Activated CD8-positive, alpha-beta T cell treated with anti-CD3 and anti-CD28 coated beads, Interleukin-2, amount 10 ng/mL, durations not matched to agents 7 days and 5 days (primary cell): ENCODE measurements at regions of chr12 and their contacts with region 1.

Region 1: DNA sequence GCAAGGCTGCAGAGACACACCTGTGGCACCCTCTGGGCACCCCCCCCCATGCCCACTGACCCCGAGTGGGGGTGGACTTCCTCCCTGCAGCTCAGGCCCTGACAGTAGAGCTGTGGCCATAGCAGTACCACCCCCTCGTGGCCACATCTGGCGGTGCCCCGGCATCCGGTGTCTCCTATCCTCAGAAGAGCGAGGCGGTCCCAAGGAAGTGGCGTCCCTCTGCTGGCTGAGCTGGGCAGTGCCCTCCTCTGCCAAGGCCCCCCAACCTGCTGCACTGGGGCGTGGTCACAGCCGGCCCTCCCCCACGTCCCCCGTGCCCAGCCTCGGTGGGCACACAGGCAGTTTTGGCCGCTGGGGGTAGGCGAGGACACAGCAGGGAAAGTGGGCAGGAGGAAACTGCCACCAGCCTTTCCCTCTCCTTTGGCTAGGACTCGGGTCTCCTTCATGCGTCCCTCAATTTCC is 6.0 kb upstream of the SLC6A12 start:
- DNase-seq: peak; percentile 89
- ATAC-seq: peak; percentile 96
- H3K4me3 Mint-ChIP-seq: no peak overlapping the region
- H3K27ac Mint-ChIP-seq: no peak overlapping the region
- H3K4me1 Mint-ChIP-seq: peaks cover 5% of the 10 kb centered on the region
- H3K27me3 Mint-ChIP-seq: peaks cover 3% of the 10 kb centered on the region

Region 2: DNA sequence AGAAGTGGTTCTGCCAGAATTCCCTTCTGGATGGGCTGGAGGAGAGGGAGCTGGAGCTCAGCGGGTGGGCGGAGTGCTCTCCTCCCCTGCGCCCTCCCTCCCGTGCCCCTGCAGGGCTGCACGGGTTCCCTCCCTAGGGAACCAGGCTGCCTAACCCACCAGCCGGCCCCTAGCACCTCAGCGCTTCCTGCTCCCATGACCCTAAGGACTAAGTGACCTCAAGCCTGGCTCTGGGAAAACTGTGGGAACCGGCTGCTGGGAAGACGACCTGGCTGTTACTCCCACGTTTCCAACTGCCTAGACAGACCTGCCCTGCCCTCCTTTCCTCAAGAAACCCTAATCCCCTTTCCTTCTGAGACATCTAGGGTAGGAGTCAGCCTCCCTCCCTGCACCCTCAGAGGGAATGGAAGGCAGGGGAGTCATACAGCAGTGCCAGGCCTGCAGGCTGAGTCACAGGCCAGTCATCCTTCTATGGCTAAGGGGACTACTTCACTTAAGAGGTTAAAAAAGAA is 37.5 kb before region 1 on chr12:
- CTCF ChIA-PET with region 1: no interaction called
- POLR2A ChIA-PET with region 1: no interaction called
- DNase-seq: no peak
- ATAC-seq: no peak
- H3K4me3 Mint-ChIP-seq: no peak overlapping the region
- H3K27ac Mint-ChIP-seq: no peak overlapping the region
- H3K4me1 Mint-ChIP-seq: peaks cover 13% of the 10 kb centered on the region
- H3K27me3 Mint-ChIP-seq: peaks cover 10% of the 10 kb centered on the region

Region 3: GRCh38 chr12:201361-201760 is 18.6 kb before region 1 on chr12:
- CTCF ChIA-PET with region 1: interaction called, 10 read pairs
- POLR2A ChIA-PET with region 1: no interaction called
- DNase-seq: no peak
- ATAC-seq: no peak
- H3K4me3 Mint-ChIP-seq: no peak overlapping the region
- H3K27ac Mint-ChIP-seq: no peak overlapping the region
- H3K4me1 Mint-ChIP-seq: no peaks in the 10 kb centered on the region
- H3K27me3 Mint-ChIP-seq: peaks cover 35% of the 10 kb centered on the region